ENCODE measurements at regions of chr14 and their contacts with region 1.

Region 1: DNA sequence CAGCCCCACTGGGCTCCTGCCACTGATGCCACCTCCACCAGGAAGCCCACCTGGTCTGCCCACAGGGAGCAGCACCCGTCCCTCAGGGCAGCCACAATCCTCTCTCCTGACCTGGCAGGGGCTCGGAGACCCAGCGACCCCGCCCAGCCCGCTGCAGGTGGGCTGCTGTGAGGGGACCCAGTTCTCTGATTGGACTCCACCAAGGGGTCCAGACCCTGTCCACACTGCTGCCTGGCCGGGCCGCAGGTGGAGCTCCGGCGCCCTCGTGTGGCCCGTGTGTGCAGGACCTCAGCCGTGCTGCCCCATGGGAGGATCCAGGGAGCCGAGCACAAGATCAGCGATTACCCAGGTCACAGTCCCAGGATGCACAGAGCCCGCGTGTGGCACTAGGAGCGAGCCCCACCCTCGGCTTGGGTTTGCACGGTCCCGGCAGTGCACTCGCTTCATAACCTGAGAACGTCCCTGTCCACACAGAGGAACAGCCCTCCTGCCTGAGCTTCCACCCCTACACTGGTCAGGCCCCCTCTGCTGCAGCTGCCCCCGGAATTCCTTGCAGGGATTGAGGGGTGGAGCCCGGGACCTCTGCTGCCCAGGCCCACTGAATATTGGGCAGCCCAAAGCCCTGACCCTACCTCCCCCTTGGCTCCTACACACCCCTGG is 35.4 kb upstream of the TMEM179 start:
- DNase-seq: no peak
- H3K4me3 ChIP-seq: no peak overlapping the region
- H3K27ac ChIP-seq: no peak overlapping the region
- H3K4me1 ChIP-seq: no peaks in the 10 kb centered on the region
- H3K27me3 ChIP-seq: no peaks in the 10 kb centered on the region
- CTCF ChIP-seq: peak; percentile 82 to 90 (median 85)

Region 2: GRCh38 chr14:104085030-104085888 is 554.8 kb before region 1 on chr14 and contains the start of gene ASPG:
- intact Hi-C with region 1: loop called (anchors 10 kb)
- DNase-seq: no peak
- H3K4me3 ChIP-seq: peak within 1 kb of the TSS; percentile 17 to 39
- H3K27ac ChIP-seq: no peak within 1 kb of the TSS
- H3K4me1 ChIP-seq: no peaks in the 10 kb centered on the region
- H3K27me3 ChIP-seq: peaks cover 9% of the 10 kb centered on the region
- CTCF ChIP-seq: no peak
- total RNA-seq, gene ASPG: not detected

Region 3: DNA sequence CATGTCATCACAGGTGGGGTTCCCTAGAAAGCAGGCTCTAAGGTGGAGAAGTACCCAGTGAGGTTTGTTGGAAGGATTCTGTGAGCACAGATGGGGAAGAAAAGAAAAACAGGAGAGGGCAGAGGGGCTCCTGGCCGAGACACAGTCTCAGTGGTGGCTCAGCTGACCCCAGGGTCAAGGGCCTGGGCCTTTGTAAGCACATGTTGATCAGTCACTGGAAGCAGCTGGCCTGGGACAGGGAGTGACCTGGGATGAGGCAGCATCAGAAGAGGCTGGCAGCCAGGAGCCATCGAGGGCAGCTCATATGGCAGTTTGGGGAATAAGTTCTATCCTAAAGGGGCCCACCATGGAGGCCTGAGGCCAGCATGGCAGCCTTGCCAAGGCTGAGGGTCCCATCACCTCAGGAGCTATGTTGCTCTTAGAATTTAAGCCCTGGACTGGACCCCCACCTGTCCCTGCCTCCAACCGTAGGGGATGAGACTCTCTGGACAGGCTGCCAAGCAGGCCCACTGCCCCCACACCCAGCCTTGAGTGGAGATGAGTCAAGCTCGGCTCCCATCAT is 29.2 kb before region 1 on chr14:
- intact Hi-C with region 1: no loop called
- DNase-seq: peak in 1 of 2 donors; percentile 35
- H3K4me3 ChIP-seq: no peak overlapping the region
- H3K27ac ChIP-seq: no peak overlapping the region
- H3K4me1 ChIP-seq: no peaks in the 10 kb centered on the region
- H3K27me3 ChIP-seq: no peaks in the 10 kb centered on the region
- CTCF ChIP-seq: no peak

Region 4: DNA sequence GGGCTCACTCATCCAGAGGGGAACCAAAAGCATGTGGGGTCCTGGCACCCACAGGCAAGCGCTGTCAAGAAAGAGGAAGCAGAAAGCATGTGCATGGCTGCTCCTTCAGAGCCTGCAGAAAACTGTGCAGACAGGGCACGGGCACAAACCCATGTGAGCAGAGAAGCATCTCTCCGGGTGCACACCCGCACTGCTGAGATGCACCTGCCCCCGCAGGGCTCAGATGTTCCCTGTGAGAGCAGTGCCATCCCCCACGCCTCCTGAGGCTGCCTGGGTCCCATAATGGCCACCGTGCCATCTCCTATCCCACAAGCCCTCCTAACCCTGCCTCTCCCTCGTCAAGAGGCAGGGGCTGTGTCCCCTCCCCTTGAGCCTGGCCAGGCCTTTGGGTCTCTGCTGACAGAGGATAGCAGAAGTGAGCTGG is 17.1 kb after region 1 on chr14:
- intact Hi-C with region 1: no loop called
- DNase-seq: no peak
- H3K4me3 ChIP-seq: no peak overlapping the region
- H3K27ac ChIP-seq: no peak overlapping the region
- H3K4me1 ChIP-seq: peaks cover 6 to 12% of the 10 kb centered on the region in 2 donors
- H3K27me3 ChIP-seq: no peaks in the 10 kb centered on the region
- CTCF ChIP-seq: no peak